Activated CD4-positive, alpha-beta T cell treated with anti-CD3 and anti-CD28 coated beads for 36 hours (primary cell): ENCODE measurements at regions of chr22 and their contacts with region 1.

Region 1: GRCh38 chr22:21867528-21868266 is at the start of gene MAPK1:
- DNase-seq: peak; percentile 97
- ATAC-seq: peak; percentile 89
- H3K4me3 Mint-ChIP-seq: peak within 1 kb of the TSS; percentile 93
- H3K27ac Mint-ChIP-seq: peak within 1 kb of the TSS; percentile 99
- H3K4me1 Mint-ChIP-seq: peaks cover 38% of the 10 kb centered on the region
- H3K27me3 Mint-ChIP-seq: peaks cover 5% of the 10 kb centered on the region
- total RNA-seq, gene MAPK1: 91.9 to 108 TPM

Region 2: DNA sequence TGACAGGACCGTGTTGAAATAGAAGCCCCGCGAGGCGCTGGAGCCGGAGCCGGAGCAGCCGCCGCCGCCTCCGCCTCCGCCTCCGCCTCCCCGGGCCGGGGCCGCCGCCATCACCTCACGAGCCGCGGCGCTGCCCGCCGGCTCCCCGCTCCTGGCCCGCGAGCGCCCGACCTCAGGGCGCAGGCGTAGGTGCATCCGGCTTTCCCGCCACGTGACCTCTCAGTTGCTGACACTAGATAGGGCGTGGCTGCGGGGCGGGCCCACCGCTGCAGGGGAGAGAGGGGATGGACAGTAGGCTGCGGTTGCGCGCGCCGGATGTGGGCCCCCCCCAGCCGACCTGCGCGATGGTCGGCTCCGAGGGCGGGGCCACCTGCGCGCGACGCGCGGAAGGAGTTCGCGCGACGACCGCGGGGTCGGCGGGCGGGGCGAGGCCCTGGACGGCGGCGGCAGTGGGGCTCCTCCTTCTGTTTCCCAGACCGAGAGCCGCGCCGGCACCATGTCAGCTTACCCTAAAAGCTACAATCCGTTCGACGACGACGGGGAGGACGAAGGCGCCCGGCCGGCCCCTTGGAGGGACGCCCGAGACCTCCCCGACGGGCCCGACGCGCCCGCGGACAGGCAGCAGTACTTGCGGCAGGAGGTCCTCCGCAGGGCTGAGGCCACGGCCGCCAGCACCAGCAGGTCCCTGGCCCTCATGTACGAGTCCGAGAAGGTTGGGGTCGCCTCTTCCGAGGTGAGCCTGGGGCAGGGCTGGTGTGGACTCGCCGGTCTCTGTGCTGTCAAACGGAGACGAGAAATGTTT is 1008.9 kb before region 1 on chr22 and contains the starts of genes PI4KA and SNAP29:
- CTCF ChIA-PET with region 1: no interaction called
- POLR2A ChIA-PET with region 1: no interaction called
- intact Hi-C with region 1: loop called in 1 of 2 experiments (anchors 5 kb)
- DNase-seq: peak; percentile 99
- ATAC-seq: peak; percentile 95
- H3K4me3 Mint-ChIP-seq: peak within 1 kb of the TSS; percentile 87
- H3K27ac Mint-ChIP-seq: peak within 1 kb of the TSS; percentile 79
- H3K4me1 Mint-ChIP-seq: peaks cover 46% of the 10 kb centered on the region
- H3K27me3 Mint-ChIP-seq: no peaks in the 10 kb centered on the region
- total RNA-seq, gene PI4KA: 52.8 TPM
- total RNA-seq, gene SNAP29: 22.8 to 33.8 TPM

Region 3: DNA sequence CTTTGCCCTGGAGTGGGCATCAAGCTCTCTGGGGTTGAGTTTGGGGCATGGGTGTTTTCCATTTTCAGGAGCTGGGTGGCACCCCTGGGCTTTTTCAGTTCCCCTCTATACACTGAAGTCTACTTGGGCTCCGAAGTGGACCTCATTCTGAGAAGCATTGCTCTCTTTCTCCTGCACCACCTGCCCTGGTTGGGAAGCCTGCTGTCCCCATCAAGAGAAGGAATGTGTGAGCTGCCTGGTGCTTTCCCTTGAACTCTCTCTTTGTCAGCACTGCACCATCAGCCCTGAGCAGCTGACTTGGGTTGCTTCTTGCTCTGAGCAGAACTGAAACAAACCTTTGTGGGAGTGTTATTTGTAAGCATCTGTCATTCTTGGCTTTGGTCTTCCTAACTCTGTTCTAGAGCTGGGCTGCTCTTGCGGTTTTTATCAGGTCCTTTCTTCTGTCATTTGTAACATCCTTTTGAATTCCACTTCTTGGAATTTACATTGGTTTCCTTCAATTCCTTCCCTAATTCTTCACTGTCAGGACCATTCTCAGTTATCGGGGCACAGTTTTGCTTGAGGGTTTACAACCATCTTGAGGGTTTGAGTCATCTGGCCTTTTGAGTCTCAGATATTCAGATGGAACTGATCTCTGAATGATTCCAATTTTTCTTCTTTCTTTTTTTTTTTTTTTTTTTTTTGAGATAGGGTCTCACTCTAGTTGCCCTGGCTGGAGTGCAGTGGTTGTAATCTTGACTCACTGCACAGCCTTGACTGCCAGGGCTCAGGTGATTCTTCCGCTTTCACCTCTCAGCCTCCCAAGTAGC is 279.7 kb before region 1 on chr22:
- CTCF ChIA-PET with region 1: no interaction called
- POLR2A ChIA-PET with region 1: no interaction called
- intact Hi-C with region 1: loop called in 1 of 2 experiments (anchors 10 kb)
- DNase-seq: peak; percentile 79
- ATAC-seq: peak; percentile 97
- H3K4me3 Mint-ChIP-seq: peak overlapping the region; percentile 12
- H3K27ac Mint-ChIP-seq: peak overlapping the region; percentile 88
- H3K4me1 Mint-ChIP-seq: peaks cover 69% of the 10 kb centered on the region
- H3K27me3 Mint-ChIP-seq: no peaks in the 10 kb centered on the region

Region 4: GRCh38 chr22:21735200-21736076 is 132.3 kb before region 1 on chr22 and contains the start of gene YPEL1:
- CTCF ChIA-PET with region 1: no interaction called
- POLR2A ChIA-PET with region 1: no interaction called
- intact Hi-C with region 1: loop called in 1 of 2 experiments (anchors 1 kb)
- DNase-seq: peak; percentile 96
- ATAC-seq: peak; percentile 95
- H3K4me3 Mint-ChIP-seq: peak within 1 kb of the TSS; percentile 84
- H3K27ac Mint-ChIP-seq: peak within 1 kb of the TSS; percentile 79
- H3K4me1 Mint-ChIP-seq: peaks cover 10% of the 10 kb centered on the region
- H3K27me3 Mint-ChIP-seq: peaks cover 3% of the 10 kb centered on the region
- total RNA-seq, gene YPEL1: 1.0 to 1.5 TPM

Region 5: GRCh38 chr22:21766691-21767462 is 100.8 kb before region 1 on chr22:
- CTCF ChIA-PET with region 1: no interaction called
- POLR2A ChIA-PET with region 1: interaction called, 6 read pairs
- intact Hi-C with region 1: loop called (anchors 1 to 2 kb)
- DNase-seq: peak; percentile 83
- ATAC-seq: peak; percentile 77
- H3K4me3 Mint-ChIP-seq: no peak overlapping the region
- H3K27ac Mint-ChIP-seq: peak overlapping the region; percentile 71
- H3K4me1 Mint-ChIP-seq: peaks cover 65% of the 10 kb centered on the region
- H3K27me3 Mint-ChIP-seq: no peaks in the 10 kb centered on the region

Region 6: DNA sequence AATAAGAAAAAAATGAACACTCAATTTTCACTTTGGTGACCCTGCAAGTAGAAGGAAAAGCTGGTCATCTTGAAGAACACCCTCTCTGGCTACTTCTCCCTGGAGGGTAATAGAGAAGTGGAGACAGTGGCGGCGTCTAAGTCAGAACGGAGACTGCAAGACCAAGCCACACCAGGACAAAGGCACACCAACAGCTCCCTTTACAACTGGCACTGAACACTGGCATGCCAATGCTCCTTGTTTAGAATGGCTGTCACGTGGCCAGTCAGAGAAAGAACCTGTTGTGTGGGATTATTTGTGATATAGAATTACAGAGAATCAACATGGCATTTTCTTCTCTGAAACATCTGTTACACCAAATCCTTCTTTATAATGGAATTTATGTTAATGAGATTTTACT is 70.8 kb before region 1 on chr22:
- CTCF ChIA-PET with region 1: no interaction called
- POLR2A ChIA-PET with region 1: no interaction called
- intact Hi-C with region 1: no loop called
- DNase-seq: no peak
- ATAC-seq: no peak
- H3K4me3 Mint-ChIP-seq: no peak overlapping the region
- H3K27ac Mint-ChIP-seq: no peak overlapping the region
- H3K4me1 Mint-ChIP-seq: peaks cover 5% of the 10 kb centered on the region
- H3K27me3 Mint-ChIP-seq: no peaks in the 10 kb centered on the region

Region 7: GRCh38 chr22:21816787-21817496 is 50.8 kb before region 1 on chr22:
- CTCF ChIA-PET with region 1: interaction called, 3 read pairs
- POLR2A ChIA-PET with region 1: interaction called, 5 read pairs
- intact Hi-C with region 1: loop called (anchors 1 to 2 kb)
- DNase-seq: peak; percentile 23
- ATAC-seq: peak; percentile 91
- H3K4me3 Mint-ChIP-seq: peak overlapping the region; percentile 67
- H3K27ac Mint-ChIP-seq: peak overlapping the region; percentile 95
- H3K4me1 Mint-ChIP-seq: peaks cover 63% of the 10 kb centered on the region
- H3K27me3 Mint-ChIP-seq: no peaks in the 10 kb centered on the region

Region 8: DNA sequence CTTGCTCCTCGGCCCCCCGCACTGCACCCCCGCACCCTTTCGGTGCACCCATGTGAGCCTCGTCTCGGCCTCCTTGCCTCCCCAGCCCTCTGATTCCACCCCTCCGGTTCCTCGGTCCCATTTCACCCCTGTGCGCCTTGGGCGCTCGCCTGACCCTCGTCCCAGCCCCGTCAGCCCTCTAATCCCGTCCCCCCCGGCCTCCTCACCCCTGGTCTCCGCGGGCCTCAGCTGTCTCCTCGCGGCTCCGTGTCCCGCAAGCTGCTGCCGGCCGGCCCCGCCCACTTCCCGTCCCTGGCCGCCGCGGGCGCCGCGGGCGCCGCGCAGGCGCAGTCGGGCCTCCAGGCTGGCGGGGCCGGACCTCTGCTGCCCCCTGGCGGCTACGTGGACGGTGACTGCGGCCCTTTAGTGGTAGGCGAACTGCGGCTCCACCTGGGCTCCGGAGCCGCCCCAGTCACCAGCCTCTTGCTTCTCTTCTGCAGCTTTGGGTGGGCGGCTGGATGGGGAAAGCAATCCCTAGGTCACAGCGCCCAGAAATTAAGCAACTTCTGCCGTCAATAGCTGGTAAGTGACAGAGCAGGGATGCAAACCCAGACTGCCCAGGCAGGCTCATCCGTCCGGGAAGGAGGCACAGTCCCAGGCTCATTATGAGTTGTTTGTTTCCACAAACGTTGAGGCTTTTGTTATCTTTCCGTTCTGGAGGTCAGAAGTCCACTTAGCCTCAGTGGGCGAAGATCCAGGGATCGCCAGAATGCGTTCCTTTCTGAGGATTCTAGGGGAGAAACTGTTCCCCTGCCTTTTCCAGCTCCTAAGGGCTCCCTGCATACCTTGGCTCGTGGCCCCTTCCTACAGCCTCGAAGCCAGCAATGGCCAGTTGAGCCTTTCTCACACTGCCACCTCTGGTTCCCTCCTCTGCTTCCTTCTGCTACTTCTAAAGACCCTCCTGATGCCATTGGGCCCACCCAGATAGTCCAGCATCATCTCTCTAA is 85.2 kb after region 1 on chr22 and contains the start of gene PPM1F:
- CTCF ChIA-PET with region 1: no interaction called
- POLR2A ChIA-PET with region 1: no interaction called
- intact Hi-C with region 1: loop called (anchors 2 to 5 kb)
- DNase-seq: peak; percentile 95
- ATAC-seq: peak; percentile 91
- H3K4me3 Mint-ChIP-seq: peak within 1 kb of the TSS; percentile 78
- H3K27ac Mint-ChIP-seq: peak within 1 kb of the TSS; percentile 70
- H3K4me1 Mint-ChIP-seq: peaks cover 11% of the 10 kb centered on the region
- H3K27me3 Mint-ChIP-seq: no peaks in the 10 kb centered on the region
- total RNA-seq, gene PPM1F: 23.6 to 27.7 TPM